RWPE1 (cell line): ENCODE measurements at regions of chr20 and their contacts with region 1.

Region 1: DNA sequence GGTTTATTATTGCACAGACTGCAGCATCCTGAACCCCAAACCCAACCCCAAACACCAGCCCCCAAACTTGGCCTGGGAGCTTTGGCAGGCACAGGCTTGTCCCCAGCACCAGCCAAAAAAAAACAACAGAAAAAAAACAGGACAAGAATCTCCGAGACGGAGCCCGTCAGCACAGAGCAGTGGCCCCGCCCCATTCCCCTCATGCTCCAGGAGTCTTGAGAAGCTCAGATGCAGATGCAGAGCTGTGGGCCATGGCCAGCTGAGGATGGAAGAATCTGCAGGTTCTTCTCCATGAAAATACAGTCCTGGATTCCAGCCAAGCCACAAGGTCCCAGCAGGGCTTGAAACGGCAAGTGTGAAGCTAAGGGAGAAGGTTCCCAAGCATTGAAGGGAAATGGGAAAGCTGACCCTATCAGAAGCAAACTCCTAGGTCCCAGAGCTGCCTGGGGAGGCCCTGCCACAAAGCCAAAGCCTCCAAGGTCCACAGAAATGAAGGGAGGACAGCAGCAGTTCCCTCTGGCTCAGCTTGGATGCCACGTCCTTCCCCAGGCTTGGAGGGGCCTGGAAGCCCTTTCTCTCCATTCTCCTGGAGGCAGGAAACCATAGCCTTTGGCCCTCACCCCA is 75.2 kb downstream of the JPH2 start:
- DNase-seq: peak; percentile 46
- H3K27ac ChIP-seq: peak overlapping the region; percentile 58
- CTCF ChIP-seq: no peak

Region 2: GRCh38 chr20:44064501-44065400 is 47.1 kb before region 1 on chr20:
- CTCF ChIA-PET with region 1: no interaction called
- POLR2A ChIA-PET with region 1: no interaction called
- DNase-seq: no peak
- H3K27ac ChIP-seq: no peak overlapping the region
- CTCF ChIP-seq: no peak

Region 3: GRCh38 chr20:44123251-44123650 is 11.4 kb after region 1 on chr20:
- CTCF ChIA-PET with region 1: no interaction called
- POLR2A ChIA-PET with region 1: no interaction called
- DNase-seq: no peak
- H3K27ac ChIP-seq: no peak overlapping the region
- CTCF ChIP-seq: no peak

Region 4: GRCh38 chr20:44153636-44154043 is 41.8 kb after region 1 on chr20:
- CTCF ChIA-PET with region 1: interaction called, 12 read pairs
- POLR2A ChIA-PET with region 1: no interaction called
- DNase-seq: no peak
- H3K27ac ChIP-seq: no peak overlapping the region
- CTCF ChIP-seq: no peak

Region 5: DNA sequence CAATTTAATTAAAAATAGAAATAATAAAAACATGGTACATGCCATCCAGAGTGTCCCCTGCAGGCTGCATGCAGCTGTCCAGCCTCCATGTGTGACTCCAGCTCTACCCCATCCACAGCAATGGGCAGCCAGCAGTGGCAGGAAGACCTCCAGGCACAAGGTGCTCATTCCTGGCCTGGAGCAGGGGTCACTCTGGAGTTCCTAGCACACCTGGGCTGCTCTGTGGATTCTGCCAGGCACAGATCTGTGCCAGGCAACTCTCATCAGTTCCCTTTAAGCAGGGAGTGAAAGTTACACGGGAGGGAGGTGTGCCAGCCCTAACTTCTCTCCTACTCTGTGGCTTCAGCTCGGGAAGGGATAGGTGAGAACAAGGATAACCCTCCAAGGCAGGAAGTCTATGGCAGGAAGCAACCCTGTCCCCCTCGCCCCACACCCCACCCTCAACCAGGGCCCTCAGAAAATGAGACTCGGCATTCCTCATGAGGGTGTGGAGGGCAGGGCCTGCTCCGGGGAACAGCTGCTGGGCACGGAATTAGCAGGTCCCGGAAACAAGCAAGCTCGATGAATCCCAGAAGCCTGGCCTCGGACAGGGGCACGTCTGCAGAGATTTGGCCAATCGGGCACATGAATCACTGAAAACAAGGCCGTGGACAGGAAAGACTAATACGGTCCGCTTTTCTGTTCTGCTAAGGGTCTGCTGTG is 65.2 kb after region 1 on chr20:
- CTCF ChIA-PET with region 1: interaction called, 14 read pairs
- POLR2A ChIA-PET with region 1: no interaction called
- DNase-seq: peak; percentile 94
- H3K27ac ChIP-seq: peak overlapping the region; percentile 94
- CTCF ChIP-seq: no peak

Region 6: GRCh38 chr20:44196271-44196670 is 84.4 kb after region 1 on chr20:
- CTCF ChIA-PET with region 1: interaction called, 196 read pairs
- POLR2A ChIA-PET with region 1: no interaction called
- DNase-seq: peak; percentile 50
- H3K27ac ChIP-seq: no peak overlapping the region
- CTCF ChIP-seq: peak; percentile 24; the same call in 1 of the 2 replicates